Left ventricle myocardium inferior (tissue), 1 donor: ENCODE measurements at regions of chr6 and their contacts with region 1.

Region 1: GRCh38 chr6:130322673-130323268 is 43.0 kb upstream of the TMEM200A start:
- DNase-seq: no peak
- H3K4me3 ChIP-seq: no peak overlapping the region
- H3K27ac ChIP-seq: no peak overlapping the region
- H3K4me1 ChIP-seq: no peaks in the 10 kb centered on the region
- H3K27me3 ChIP-seq: peaks cover 2% of the 10 kb centered on the region
- CTCF ChIP-seq: peak; percentile 86

Region 2: DNA sequence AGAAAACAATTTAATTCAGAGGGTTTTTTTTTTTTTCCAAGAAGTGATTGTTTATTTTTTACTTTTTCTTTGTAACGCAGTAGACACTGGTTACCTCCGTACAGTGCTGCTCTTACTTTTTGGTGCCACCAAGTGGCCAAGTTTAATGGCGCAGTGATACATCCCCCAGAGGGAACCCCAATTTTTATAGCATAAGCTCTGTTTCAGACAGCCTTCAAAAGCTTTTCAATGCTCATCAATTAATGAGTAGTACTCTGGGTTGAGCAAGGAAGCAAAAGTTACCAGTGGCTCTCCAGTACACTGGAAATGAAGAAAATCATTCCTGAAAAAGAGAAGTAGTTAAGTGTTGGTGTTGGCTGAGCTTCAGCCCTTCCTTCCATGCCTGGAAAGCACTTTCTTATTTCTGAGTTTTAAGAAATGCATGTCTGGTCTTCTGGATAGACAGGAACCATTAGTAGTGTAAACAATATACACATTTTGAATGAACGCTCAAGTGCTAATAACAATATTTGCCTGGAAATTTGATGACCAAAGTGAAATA is 375.3 kb after region 1 on chr6:
- intact Hi-C with region 1: loop called (anchors 5 kb)
- DNase-seq: no peak
- H3K4me3 ChIP-seq: no peak overlapping the region
- H3K27ac ChIP-seq: no peak overlapping the region
- H3K4me1 ChIP-seq: no peaks in the 10 kb centered on the region
- H3K27me3 ChIP-seq: peaks cover 6% of the 10 kb centered on the region
- CTCF ChIP-seq: peak; percentile 62

Region 3: DNA sequence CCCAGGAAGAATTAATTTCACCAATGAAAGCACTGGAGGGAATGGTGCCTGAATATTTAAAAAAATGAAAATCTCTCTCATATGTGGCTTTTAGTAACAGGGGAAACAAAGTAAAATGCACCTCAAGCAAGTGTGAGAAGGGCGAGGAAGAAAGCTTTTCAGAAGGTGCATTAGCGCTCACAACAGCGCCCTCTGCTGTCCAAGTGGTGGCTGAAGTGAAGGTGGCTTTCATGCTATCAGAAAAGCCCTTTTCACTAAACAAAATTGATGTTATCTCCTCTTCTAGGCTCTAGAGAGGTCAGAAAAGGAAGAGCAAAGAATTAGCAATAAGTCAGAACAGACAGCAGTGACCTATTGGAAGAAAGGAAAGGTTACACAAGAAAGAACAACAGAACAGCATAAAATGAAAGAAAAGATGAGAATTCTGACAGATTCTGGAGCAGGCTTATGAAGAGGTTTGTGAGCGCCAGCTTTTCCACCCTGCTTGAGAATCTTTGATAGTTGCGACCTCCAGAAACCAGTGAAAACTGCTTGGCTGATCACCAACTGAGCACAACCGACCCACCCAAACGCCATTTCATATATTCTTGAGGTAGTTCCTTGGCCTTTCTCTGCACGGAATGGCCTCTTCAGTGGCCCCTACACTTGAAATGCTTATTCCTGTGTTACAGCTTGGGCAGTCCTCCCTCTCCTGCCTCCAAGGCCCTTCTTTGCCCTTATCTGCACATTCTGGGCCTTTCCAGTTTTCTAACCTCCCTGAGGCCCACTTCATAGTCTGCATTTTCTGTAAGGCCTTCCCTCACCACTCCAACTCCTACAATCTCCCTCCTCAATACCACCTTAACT is 549.7 kb after region 1 on chr6:
- intact Hi-C with region 1: loop called (anchors 5 kb)
- DNase-seq: peak; percentile 64
- H3K4me3 ChIP-seq: no peak overlapping the region
- H3K27ac ChIP-seq: no peak overlapping the region
- H3K4me1 ChIP-seq: no peaks in the 10 kb centered on the region
- H3K27me3 ChIP-seq: no peaks in the 10 kb centered on the region
- CTCF ChIP-seq: peak; percentile 91